Activated CD8-positive, alpha-beta T cell treated with anti-CD3 and anti-CD28 coated beads, Interleukin-2, amount 10 ng/mL, durations not matched to agents 7 days and 5 days (primary cell): ENCODE measurements at regions of chr5 and their contacts with region 1.

Region 1: GRCh38 chr5:94740286-94740685 is 121.8 kb downstream of the SLF1 start:
- DNase-seq: no peak
- ATAC-seq: no peak
- H3K4me3 Mint-ChIP-seq: no peak overlapping the region
- H3K27ac Mint-ChIP-seq: no peak overlapping the region
- H3K4me1 Mint-ChIP-seq: no peaks in the 10 kb centered on the region
- H3K27me3 Mint-ChIP-seq: peaks cover 6% of the 10 kb centered on the region

Region 2: DNA sequence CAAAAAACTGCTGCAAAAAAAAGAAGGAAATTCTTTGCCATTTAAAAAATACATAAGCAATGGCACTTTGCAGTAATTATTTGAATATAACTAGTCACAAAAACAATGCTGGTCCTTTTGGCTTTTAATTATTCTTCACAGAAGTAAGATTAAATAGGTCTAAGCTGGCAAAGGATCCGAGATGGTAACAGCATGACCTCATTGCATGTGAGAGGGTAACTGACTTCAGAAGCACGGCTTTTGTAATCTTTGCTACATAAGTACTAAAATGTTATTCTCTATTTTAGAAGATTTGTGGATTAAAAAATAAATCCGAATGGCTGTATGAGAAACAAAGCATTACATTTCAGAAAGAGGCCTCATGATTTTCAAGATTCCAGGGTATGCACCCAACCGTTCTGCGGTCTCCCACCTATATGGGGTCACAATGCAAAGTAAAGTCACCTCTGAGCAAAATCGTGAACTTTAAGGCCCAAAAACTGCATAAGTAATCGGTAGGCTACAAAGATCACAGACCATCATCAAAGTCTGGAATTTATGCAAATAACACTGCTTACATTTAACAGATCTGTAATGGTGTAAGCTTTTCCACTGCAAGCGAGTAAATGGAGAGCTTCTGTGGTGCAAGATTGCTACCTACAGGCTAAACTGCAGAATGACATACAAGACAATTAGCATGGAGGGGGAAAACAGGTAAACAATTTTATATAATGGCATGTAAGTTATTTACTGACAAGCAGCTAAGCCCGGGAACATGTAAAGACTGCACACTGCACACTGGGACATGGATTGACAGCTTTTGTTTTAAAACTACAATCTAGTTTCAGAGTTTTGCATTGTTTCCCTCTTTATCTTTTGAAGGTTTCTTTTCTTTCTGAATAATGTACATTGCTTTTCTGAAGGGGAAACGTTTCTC is 109.8 kb after region 1 on chr5:
- CTCF ChIA-PET with region 1: interaction called, 15 read pairs
- POLR2A ChIA-PET with region 1: no interaction called
- DNase-seq: peak; percentile 50
- ATAC-seq: peak; percentile 71
- H3K4me3 Mint-ChIP-seq: no peak overlapping the region
- H3K27ac Mint-ChIP-seq: no peak overlapping the region
- H3K4me1 Mint-ChIP-seq: peaks cover 4% of the 10 kb centered on the region
- H3K27me3 Mint-ChIP-seq: peaks cover 2% of the 10 kb centered on the region

Region 3: DNA sequence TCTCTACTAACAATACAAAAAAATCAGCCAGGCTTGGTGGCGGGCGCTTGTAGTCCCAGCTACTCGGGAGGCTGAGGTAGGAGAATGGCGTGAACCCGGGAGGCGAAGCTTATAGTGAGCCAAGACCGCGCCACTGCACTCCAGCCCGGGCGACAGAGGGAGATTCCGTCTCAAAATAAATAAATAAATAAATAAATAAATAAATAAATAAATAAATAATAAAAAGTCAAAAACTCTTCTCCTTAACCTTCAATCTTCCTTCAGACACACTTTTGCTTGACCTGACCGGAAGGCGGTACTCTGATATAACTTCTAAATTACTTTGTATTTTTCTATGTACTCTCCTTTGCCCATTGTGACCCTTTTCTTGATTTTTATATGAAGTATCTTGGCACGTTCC is 180.3 kb after region 1 on chr5:
- CTCF ChIA-PET with region 1: no interaction called
- POLR2A ChIA-PET with region 1: no interaction called
- DNase-seq: no peak
- ATAC-seq: no peak
- H3K4me3 Mint-ChIP-seq: no peak overlapping the region
- H3K27ac Mint-ChIP-seq: no peak overlapping the region
- H3K4me1 Mint-ChIP-seq: no peaks in the 10 kb centered on the region
- H3K27me3 Mint-ChIP-seq: peaks cover 4% of the 10 kb centered on the region